ENCODE measurements at regions of chr1 and their contacts with region 1.

Region 1: DNA sequence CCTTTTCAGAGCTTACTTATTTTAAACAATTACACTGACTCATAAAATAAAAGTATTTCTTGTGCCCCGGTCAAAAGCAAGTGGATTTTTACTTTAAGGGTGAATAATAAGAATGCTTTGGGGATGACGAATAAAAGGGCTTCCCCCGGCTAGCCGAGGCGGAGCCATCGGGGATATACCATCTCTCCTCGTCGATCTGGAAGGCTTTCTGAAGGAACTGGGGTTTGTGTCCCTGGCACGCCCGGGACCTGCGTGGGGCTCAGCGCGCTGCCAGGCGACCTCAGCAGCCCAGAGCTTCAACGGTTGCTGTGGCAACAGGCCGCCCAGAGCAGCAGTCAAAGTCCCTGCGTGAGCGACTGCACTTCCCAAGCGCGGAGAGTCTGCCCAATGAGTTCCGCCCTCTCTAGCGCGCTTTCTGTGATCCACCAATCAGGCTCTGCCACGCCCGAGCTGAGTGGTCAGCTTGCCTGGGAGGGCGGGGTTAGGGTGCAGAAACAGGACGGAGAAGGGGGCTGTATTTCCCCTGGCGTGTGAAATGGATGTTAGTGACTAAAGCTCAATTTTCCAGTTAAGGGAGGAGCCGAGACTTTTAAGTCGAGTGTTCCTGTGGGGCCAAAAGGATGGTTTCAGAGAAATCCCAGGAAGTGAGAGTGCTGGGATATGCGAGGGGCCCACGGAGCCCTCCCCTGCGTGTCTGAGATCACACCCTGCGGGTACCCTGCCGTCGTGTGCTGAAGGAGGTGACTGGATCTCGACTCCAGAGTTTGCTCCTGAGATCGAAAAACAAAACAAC is 33.0 kb upstream of the MGST3 start:
- DNase-seq: peak; percentile 97
- H3K4me3 Mint-ChIP-seq: peak overlapping the region; percentile 91
- H3K27ac Mint-ChIP-seq: peak overlapping the region; percentile 93
- H3K4me1 Mint-ChIP-seq: peaks cover 21% of the 10 kb centered on the region
- H3K27me3 Mint-ChIP-seq: peaks cover 24% of the 10 kb centered on the region
- CTCF ChIP-seq: no peak

Region 2: GRCh38 chr1:165257969-165258459 is 340.1 kb before region 1 on chr1:
- CTCF ChIA-PET with region 1: no interaction called
- intact Hi-C with region 1: loop called (anchors 5 kb)
- DNase-seq: peak; percentile 82
- H3K4me3 Mint-ChIP-seq: no peak overlapping the region
- H3K27ac Mint-ChIP-seq: no peak overlapping the region
- H3K4me1 Mint-ChIP-seq: peaks cover 8% of the 10 kb centered on the region
- H3K27me3 Mint-ChIP-seq: peaks cover 67% of the 10 kb centered on the region
- CTCF ChIP-seq: peak; percentile 64

Region 3: DNA sequence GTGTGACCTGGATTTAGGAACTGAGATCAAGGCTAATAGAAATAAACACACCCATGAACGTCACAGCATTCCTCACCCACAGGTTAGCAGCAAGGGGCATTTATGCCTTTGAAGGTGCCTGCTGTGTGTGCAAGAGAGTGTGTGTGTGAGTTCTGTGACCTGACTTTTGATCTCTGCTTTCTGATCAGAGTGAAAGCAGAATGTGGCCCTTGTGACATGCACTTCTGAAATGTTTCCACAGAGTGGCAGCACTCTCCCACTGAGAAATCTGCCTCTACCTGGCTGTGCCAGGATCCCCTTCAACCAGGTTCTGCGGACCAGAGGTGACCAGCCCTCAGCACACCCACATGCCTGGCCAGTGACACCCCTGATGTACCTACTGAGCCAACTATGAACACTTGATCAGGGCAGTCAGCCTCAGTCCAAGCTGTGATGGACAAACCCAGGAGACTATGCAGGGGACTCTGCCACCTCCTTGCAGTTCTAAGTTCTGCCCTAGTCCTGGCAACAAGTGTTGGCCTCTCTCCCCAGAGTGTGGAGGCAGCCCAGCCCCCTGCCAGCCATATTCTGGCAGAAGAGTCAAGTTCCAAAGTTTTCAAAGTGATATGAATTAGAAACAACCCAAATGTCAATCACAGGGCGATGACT is 194.1 kb before region 1 on chr1:
- CTCF ChIA-PET with region 1: interaction called, 5 read pairs
- intact Hi-C with region 1: loop called (anchors 1 kb)
- DNase-seq: peak; percentile 57
- H3K4me3 Mint-ChIP-seq: no peak overlapping the region
- H3K27ac Mint-ChIP-seq: no peak overlapping the region
- H3K4me1 Mint-ChIP-seq: no peaks in the 10 kb centered on the region
- H3K27me3 Mint-ChIP-seq: peaks cover 23% of the 10 kb centered on the region
- CTCF ChIP-seq: peak; percentile 76

Region 4: DNA sequence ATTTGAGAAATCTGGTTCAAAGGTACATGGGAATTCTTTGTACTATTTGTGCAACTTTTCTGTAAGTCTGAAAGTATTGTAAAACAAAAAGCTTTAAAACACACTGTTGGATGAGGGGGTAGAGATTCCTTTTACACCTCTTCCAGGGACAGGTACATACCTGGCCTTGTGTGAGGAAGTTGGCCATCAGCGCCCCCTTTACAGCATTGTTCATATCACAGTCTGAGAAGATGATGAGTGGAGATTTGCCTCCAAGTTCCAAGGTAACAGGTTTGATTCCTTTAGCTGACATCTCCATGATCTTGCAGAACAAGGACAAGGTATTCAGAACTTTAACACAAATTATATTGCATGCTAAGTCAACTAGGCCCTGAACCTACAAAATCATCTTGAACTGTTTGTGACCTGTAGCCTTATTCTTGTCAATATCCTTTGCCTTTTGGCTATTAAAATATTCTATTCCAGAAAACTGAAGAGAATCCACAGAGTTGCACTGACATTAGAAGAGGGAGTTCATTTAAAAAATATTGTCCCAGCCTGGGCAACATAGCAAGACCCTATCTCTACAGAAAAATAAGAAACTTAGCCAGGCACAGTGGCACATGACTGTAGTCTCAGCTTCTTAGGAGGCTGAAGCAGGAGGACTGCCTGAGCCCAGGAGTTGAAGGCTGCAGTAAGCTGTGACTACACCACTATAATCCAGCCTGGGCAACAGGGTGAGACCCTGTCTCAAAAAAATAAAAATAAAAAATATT is 81.4 kb after region 1 on chr1:
- CTCF ChIA-PET with region 1: interaction called, 3 read pairs
- intact Hi-C with region 1: loop called (anchors 5 kb)
- DNase-seq: no peak
- H3K4me3 Mint-ChIP-seq: no peak overlapping the region
- H3K27ac Mint-ChIP-seq: no peak overlapping the region
- H3K4me1 Mint-ChIP-seq: no peaks in the 10 kb centered on the region
- H3K27me3 Mint-ChIP-seq: no peaks in the 10 kb centered on the region
- CTCF ChIP-seq: no peak

Region 5: GRCh38 chr1:165717918-165718515 is 119.9 kb after region 1 on chr1:
- CTCF ChIA-PET with region 1: no interaction called
- intact Hi-C with region 1: loop called (anchors 5 kb)
- DNase-seq: peak; percentile 57
- H3K4me3 Mint-ChIP-seq: no peak overlapping the region
- H3K27ac Mint-ChIP-seq: no peak overlapping the region
- H3K4me1 Mint-ChIP-seq: no peaks in the 10 kb centered on the region
- H3K27me3 Mint-ChIP-seq: no peaks in the 10 kb centered on the region
- CTCF ChIP-seq: peak; percentile 43

Region 6: DNA sequence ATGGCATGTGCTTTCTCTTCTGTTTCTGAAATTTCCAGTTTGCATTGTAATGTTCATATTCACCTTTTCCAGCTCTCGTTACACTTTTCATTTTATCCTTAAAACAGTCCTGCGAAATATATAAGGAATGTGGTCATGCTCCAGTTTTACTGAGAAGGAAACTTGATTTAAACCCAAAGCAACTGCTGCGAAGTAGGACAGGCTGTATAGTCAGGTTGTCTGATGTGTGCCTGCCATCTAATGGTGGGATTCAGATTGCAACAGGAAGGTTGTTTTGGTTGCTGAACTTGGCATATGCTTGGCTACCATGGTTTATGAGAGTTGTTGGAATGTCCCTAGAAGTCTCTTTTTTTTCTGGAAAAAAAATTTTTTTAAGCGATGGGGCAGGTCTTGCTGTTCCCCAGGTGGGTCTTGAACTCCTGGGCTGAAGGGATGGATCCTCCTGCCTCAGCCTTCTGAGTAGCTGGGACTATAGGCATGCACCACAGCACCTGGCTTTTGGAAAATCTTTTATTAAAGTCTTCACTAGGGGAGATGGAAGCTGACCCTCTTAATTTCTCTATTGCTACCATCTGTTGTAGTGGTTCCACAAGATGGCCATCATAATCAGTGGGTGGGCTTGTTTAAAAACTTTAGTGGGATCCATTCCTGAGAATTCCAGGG is 316.2 kb after region 1 on chr1:
- CTCF ChIA-PET with region 1: interaction called, 3 read pairs
- intact Hi-C with region 1: loop called (anchors 1 kb)
- DNase-seq: peak; percentile 75
- H3K4me3 Mint-ChIP-seq: no peak overlapping the region
- H3K27ac Mint-ChIP-seq: no peak overlapping the region
- H3K4me1 Mint-ChIP-seq: peaks cover 22% of the 10 kb centered on the region
- H3K27me3 Mint-ChIP-seq: no peaks in the 10 kb centered on the region
- CTCF ChIP-seq: peak; percentile 72